Posterior cingulate gyrus (tissue), 11 donors: ENCODE measurements at regions of chr11 and their contacts with region 1.

Region 1: DNA sequence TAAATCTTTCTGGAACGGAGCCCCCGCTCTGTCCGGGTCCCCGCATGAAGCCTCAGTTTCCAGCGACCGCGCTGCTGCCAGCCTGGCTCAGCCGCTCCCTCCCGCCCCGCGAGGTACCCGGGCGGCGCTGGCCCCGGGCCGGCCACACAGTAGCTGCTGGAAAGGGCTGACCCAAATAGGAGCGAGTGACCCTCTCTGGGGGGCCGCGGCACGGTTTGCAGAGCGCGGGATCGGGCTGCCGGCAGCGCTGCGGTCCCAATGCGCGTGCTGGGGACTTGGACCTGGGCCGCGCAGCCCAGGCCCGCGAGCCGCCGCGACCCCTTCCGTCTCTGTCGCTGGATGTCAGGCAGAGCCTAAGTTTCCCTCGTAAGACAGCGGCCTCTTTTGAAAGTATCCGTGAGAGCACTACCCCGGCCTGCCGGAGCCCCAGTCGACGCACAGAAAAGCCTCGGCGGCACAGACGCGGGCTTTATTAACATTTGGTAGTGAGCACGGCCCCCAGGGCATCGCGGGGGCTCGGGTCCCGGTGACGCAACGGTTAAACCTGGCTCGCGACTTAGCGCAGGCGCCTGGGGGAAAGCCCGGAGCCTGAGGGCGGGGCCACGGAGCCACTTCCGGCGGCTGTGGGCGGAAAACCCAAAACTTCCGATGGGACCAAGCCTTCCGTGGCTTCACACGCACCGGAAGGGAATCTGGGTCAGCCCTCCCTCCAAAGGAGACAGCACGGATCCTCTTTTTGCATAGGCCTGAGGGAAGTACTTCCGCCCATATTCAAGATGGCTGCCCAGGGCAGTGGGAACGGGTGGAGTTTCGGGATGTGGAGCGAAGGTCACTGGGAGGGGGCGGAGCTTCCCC is 14.9 kb downstream of the BAD start:
- DNase-seq: peak; percentile 97 to 100 (median 99)

Region 2: GRCh38 chr11:64284962-64285884 is 15.6 kb after region 1 on chr11 and contains the start of gene GPR137:
- intact Hi-C with region 1: loop called (anchors 1 kb)
- DNase-seq: peak; percentile 81 to 98 (median 86)